Activated CD8-positive, alpha-beta T cell treated with anti-CD3 and anti-CD28 coated beads, Interleukin-2, amount 10 ng/mL, durations not matched to agents 7 days and 5 days (primary cell): ENCODE measurements at regions of chr17 and their contacts with region 1.

Region 1: GRCh38 chr17:45135192-45135977 is at the start of gene ACBD4:
- DNase-seq: peak; percentile 98
- ATAC-seq: peak; percentile 92
- H3K4me3 Mint-ChIP-seq: peak within 1 kb of the TSS; percentile 88
- H3K27ac Mint-ChIP-seq: peak within 1 kb of the TSS; percentile 84
- H3K4me1 Mint-ChIP-seq: peaks cover 22% of the 10 kb centered on the region
- H3K27me3 Mint-ChIP-seq: peaks cover 10% of the 10 kb centered on the region
- total RNA-seq, gene ACBD4: 10.0 to 12.5 TPM

Region 2: GRCh38 chr17:44899069-44899782 is 236.2 kb before region 1 on chr17 and contains the start of gene EFTUD2:
- CTCF ChIA-PET with region 1: interaction called, 14 read pairs
- POLR2A ChIA-PET with region 1: no interaction called
- DNase-seq: peak; percentile 93
- ATAC-seq: peak; percentile 93
- H3K4me3 Mint-ChIP-seq: peak within 1 kb of the TSS; percentile 92
- H3K27ac Mint-ChIP-seq: peak within 1 kb of the TSS; percentile 100
- H3K4me1 Mint-ChIP-seq: peaks cover 26% of the 10 kb centered on the region
- H3K27me3 Mint-ChIP-seq: peaks cover 4% of the 10 kb centered on the region
- total RNA-seq, gene EFTUD2: 148 to 156 TPM

Region 3: GRCh38 chr17:45060797-45061605 is 74.4 kb before region 1 on chr17 and contains the start of gene NMT1:
- CTCF ChIA-PET with region 1: interaction called, 22 read pairs
- POLR2A ChIA-PET with region 1: interaction called, 4 read pairs
- DNase-seq: peak; percentile 99
- ATAC-seq: peak; percentile 93
- H3K4me3 Mint-ChIP-seq: peak within 1 kb of the TSS; percentile 90
- H3K27ac Mint-ChIP-seq: peak within 1 kb of the TSS; percentile 96
- H3K4me1 Mint-ChIP-seq: peaks cover 35% of the 10 kb centered on the region
- H3K27me3 Mint-ChIP-seq: no peaks in the 10 kb centered on the region
- total RNA-seq, gene NMT1: 125 to 143 TPM

Region 4: DNA sequence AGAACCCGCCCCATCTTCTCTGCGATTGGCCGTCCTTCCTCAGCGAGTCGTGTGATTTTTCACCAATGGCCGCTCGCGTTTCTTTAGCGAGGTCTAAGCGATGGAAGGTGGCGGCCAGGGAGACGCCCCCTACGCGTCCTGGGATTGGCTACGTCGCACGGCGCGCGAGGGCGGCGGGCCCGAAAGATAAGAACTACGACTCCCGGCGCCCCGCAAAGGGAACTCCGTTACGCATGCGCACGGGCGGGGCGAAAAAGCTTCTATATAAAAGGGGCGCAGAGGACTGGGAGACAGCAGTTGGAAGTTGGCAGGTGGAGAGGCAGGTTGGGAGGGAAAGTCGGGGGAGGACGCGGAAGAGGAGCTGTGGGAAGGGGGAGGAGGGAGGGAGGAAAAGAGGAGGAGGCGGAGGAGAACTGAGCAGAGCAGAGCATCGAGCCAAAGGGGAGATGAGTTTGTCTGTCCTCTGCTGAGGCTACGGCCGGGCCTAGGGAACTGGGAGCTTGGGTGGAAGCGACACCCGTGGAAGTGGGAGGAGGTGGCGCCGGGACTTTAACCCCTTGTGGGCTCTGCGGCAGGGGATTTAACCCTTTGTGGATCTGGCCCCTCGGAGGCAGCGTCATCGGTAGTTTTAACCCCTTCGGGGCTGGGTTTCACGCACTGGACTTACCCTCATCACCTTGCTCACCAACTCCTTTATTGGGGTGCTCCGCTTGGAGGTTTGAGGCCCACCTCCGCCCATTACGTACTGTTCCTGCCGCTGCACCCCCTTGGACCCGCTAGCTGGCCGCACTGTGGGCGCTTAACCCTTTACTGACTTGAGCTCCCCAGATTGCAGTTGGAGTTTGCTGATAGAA is 13.0 kb after region 1 on chr17 and contains the start of gene HEXIM1:
- CTCF ChIA-PET with region 1: interaction called, 344 read pairs
- POLR2A ChIA-PET with region 1: interaction called, 66 read pairs
- DNase-seq: peak; percentile 99
- ATAC-seq: peak; percentile 80
- H3K4me3 Mint-ChIP-seq: peak within 1 kb of the TSS; percentile 95
- H3K27ac Mint-ChIP-seq: peak within 1 kb of the TSS; percentile 100
- H3K4me1 Mint-ChIP-seq: peaks cover 39% of the 10 kb centered on the region
- H3K27me3 Mint-ChIP-seq: no peaks in the 10 kb centered on the region
- total RNA-seq, gene HEXIM1: 29.2 to 29.4 TPM

Region 5: GRCh38 chr17:45184144-45184543 is 48.8 kb after region 1 on chr17:
- CTCF ChIA-PET with region 1: interaction called, 31 read pairs
- POLR2A ChIA-PET with region 1: no interaction called
- DNase-seq: no peak
- ATAC-seq: no peak
- H3K4me3 Mint-ChIP-seq: no peak overlapping the region
- H3K27ac Mint-ChIP-seq: no peak overlapping the region
- H3K4me1 Mint-ChIP-seq: no peaks in the 10 kb centered on the region
- H3K27me3 Mint-ChIP-seq: peaks cover 1% of the 10 kb centered on the region

Region 6: GRCh38 chr17:45218895-45219661 is 83.7 kb after region 1 on chr17:
- CTCF ChIA-PET with region 1: interaction called, 49 read pairs
- POLR2A ChIA-PET with region 1: no interaction called
- DNase-seq: peak; percentile 89
- ATAC-seq: no peak
- H3K4me3 Mint-ChIP-seq: peak overlapping the region; percentile 80
- H3K27ac Mint-ChIP-seq: peak overlapping the region; percentile 86
- H3K4me1 Mint-ChIP-seq: peaks cover 37% of the 10 kb centered on the region
- H3K27me3 Mint-ChIP-seq: no peaks in the 10 kb centered on the region

Region 7: GRCh38 chr17:45256114-45256966 is 121.0 kb after region 1 on chr17:
- CTCF ChIA-PET with region 1: interaction called, 21 read pairs
- POLR2A ChIA-PET with region 1: no interaction called
- DNase-seq: peak; percentile 35
- ATAC-seq: peak; percentile 58
- H3K4me3 Mint-ChIP-seq: peak overlapping the region; percentile 45
- H3K27ac Mint-ChIP-seq: peak overlapping the region; percentile 78
- H3K4me1 Mint-ChIP-seq: peaks cover 65% of the 10 kb centered on the region
- H3K27me3 Mint-ChIP-seq: no peaks in the 10 kb centered on the region